Spleen (tissue), 13 donors: ENCODE measurements at regions of chr19 and their contacts with region 1.

Region 1: DNA sequence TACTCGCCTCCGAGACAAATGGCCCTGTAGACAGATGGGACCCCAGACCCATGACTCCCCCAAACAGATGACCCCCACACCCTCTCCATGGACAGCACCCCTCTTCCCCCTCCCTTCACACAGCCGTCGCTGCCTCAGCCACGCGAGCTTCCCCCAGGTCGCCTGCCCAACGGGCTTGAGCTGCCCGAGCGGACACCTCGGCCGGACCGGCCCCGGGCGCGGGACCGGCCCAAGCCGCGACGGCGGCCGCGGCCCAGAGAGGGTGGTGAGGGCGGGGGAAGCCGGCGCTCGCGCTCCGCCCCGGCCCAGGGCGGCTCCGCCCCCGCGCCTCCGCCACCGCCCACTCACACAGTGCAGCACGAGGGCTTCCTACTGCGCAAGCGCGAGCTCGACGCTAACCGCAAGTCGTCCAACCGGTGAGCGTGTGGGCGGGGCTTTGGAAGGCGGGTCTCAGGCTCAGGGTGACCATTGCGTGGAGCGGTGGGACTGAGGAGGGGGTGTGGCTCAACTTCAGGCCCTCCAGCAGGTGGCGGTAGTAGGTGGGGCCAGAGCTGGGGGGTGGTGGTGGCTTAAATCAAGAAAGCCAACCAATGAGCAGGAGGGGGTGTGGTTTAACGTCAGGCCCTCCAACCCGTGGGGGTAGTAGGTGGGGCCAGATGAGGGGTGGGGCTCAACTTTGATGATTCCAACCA is 6.2 kb upstream of the SHKBP1 start:
- DNase-seq: peak; percentile 99
- H3K4me3 ChIP-seq: peak overlapping the region in 5 of 8 donors; percentile 2 to 65 (median 28)
- H3K27ac ChIP-seq: peak overlapping the region in 4 of 8 donors; percentile 14 to 75 (median 65)
- H3K4me1 ChIP-seq: peaks cover 5 to 34% (median 16%) of the 10 kb centered on the region in 6 donors
- H3K27me3 ChIP-seq: peaks cover 0 to 41% (median 33%) of the 10 kb centered on the region in 7 donors
- CTCF ChIP-seq: peak in 5 of 11 experiments; percentile 44 to 82 (median 77)
- POLR2A ChIP-seq: peak in 1 of 3 donors; percentile 46

Region 2: DNA sequence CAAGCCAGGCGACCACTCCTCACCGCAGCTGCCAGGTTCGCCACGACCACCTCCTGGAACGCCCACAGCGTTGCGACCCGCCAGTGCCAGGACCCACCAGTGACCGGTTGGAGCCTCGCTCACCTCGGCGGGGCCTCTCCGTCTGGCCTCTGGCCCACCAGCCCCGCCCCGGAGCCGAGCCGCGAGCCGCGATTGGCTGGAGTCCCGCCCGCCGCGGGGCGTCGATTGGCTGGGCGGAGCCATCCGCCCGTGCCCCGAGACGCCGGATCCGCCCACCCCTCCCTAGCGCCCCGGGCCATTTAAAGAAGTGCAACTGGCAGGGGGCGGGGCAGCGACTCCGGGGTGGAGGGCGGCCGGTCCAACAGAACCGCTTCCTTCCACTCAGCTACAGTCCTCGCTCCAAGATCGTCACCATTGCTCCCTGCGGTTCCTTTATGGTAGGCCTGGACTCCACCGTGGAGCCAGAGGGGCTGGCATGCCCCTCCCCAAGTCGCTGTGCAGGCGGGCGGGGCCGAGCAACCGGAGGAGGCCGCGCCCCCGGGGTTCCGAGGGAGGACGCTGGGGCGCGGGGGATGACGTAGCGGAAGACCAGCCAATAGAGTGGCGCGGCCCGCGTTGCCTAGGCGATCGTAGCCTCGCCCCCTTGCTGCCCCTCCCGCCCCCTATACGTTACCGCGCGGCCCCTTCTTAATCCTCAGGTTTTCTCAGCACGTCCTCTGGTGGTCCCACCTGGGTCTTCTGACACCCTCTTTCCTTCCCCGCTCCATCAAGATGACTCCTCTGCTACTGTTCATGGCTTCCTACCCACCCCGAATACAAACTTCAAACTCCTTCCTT is 126.0 kb before region 1 on chr19 and contains the start of gene SERTAD3:
- intact Hi-C with region 1: loop called (anchors 10 kb)
- DNase-seq: peak; percentile 99
- H3K4me3 ChIP-seq: peak within 1 kb of the TSS; percentile 73 to 95 (median 91)
- H3K27ac ChIP-seq: peak within 1 kb of the TSS; percentile 92 to 99 (median 96)
- H3K4me1 ChIP-seq: peaks cover 17 to 47% (median 27%) of the 10 kb centered on the region in 6 donors
- H3K27me3 ChIP-seq: no peaks in the 10 kb centered on the region
- CTCF ChIP-seq: peak in 8 of 11 experiments; percentile 4 to 69 (median 49)
- POLR2A ChIP-seq: peak in 2 of 3 donors; percentile 82
- total RNA-seq, gene SERTAD3: 21.5 to 51.4 (median 30.9) TPM

Region 3: DNA sequence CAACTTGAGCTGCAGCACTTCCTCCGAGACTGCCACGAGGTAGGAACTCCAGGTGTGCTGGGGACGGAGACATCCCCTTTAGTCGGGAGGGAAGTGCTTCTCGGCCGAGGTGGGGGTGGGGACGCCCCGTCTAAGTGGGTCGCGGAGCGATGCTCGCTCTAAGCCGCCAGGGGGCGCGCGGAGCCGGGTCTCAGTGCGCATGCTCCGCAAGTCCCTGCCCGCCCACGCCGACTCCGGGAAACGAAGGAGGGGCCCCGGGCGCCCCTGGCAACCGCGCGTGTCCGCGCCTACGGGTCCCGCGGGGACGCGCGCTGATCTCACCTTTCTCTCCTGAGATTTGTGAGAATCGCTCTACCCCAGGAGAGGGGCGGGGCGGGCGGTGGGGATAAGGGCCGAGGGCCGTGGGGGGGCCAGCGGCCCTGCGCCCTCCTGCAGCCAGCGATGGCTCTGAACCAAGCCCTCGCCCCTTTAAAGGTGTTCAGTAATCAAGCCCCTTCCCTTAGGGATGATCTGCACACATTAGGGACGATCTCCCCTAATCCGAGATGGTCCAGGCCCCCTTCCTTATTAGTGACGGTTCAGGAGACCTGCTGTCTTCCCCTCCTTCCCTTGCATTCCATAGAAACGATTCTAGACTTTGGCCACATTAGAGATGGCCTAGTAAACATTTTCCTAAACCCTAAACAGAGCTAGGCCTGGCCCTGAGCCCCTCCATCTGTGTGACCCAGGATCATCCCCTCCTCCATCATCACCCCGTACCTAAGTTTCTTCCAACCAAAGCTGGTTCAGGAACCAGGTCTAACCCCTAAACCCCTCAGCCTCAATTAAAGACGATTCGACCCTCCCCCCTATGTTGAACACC is 41.1 kb before region 1 on chr19:
- intact Hi-C with region 1: no loop called
- DNase-seq: peak; percentile 97
- H3K4me3 ChIP-seq: peak overlapping the region; percentile 34 to 72 (median 48)
- H3K27ac ChIP-seq: peak overlapping the region in 3 of 8 donors; percentile 23 to 45 (median 28)
- H3K4me1 ChIP-seq: peaks cover 2 to 17% (median 12%) of the 10 kb centered on the region in 6 donors
- H3K27me3 ChIP-seq: peaks cover 0 to 42% (median 11%) of the 10 kb centered on the region in 7 donors
- CTCF ChIP-seq: peak; percentile 93 to 99 (median 97)
- POLR2A ChIP-seq: no peak